HEK293 (cell line): ENCODE measurements at regions of chr11 and their contacts with region 1.

Region 1: DNA sequence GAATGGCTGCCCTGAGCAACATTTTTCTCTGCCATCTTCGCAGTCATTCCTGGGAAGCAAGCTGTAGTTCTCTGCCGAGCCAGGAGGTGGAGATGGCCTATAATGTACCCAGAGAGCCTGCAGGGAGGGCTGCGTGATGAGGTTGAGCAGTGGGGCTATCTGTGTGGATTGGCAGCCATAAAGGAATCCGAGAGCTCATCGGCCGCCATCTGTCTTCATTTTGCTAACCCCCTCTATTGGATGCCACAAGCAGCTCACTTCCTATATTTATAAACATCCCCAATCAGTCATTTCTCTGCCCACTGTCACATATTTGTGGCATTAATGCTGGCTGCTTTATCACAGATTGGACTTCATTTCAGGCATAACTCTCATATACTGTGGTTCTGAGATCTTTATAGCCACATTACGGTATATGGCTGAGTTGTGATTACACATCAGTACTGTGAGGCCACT is 209.5 kb downstream of the NTM start:
- H3K4me3 ChIP-seq: no peak overlapping the region
- H3K27ac ChIP-seq: no peak overlapping the region
- H3K4me1 ChIP-seq: no peaks in the 10 kb centered on the region
- CTCF ChIP-seq: no peak

Region 2: DNA sequence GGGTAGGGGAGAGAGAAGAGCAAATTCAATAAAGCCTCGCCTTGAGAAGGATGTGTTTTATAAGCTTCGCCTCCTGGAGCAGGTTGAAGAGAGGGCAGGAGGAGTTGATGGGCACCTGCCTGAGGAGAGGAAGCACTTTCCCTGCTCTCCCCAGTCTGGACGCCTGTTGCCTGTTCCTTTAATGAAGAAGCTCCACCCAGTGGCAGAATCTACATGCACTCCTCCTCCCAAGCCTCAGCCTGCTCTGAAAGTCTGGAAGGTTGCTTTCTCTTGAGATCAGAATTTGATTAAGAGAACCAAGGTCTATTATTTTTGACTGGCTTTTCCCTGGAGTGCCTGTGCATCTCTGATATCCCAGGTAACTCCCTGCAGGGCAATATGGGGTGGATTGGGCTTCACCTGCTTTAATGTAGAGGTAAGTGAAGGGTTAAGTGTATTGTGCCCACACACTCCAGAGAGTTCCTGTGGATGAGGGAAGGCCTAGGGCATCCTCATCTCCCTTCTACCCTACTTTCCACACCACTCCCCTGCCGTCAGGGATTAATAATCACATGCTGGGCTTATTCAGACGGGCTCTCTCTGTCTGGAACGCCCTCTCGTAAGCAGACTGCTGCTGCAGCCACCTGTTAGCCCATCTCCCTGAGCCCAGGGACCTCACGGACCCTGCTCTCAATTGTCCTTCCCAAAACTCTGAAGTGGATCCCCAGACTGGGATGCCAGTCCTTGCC is 187.3 kb before region 1 on chr11:
- CTCF ChIA-PET with region 1: no interaction called
- POLR2A ChIA-PET with region 1: no interaction called
- H3K4me3 ChIP-seq: no peak overlapping the region
- H3K27ac ChIP-seq: no peak overlapping the region
- H3K4me1 ChIP-seq: no peaks in the 10 kb centered on the region
- CTCF ChIP-seq: no peak

Region 3: DNA sequence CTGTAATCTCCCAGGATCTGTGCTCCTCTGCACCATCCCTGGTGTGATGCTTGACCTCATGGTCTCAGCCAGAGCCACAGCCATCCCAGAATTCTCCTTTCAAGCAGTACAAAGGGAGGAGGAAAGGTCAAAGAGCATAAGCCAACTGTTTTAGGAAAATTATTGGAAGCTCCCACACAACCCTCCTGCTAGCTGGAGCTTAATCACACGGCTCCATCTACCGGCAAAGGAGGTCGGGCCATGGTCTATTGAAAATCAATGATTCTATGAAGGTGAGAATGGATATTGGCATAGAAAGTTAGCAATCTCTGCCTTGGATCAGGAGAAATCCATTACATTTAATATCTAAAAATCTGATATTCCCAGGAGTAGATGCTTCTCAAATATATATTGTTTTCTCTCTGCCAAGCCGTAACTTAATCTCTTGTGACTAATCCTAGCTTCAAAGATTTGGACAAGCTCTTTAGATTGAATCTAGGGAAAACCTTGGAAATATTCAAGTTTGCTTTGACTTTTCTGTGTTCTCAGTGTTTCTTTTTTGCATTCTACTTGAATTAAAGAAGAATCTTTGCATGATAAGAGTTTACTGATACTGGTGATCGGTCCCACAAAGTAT is 50.1 kb after region 1 on chr11:
- CTCF ChIA-PET with region 1: interaction called, 11 read pairs
- POLR2A ChIA-PET with region 1: no interaction called
- H3K4me3 ChIP-seq: no peak overlapping the region
- H3K27ac ChIP-seq: no peak overlapping the region
- H3K4me1 ChIP-seq: no peaks in the 10 kb centered on the region
- CTCF ChIP-seq: no peak

Region 4: DNA sequence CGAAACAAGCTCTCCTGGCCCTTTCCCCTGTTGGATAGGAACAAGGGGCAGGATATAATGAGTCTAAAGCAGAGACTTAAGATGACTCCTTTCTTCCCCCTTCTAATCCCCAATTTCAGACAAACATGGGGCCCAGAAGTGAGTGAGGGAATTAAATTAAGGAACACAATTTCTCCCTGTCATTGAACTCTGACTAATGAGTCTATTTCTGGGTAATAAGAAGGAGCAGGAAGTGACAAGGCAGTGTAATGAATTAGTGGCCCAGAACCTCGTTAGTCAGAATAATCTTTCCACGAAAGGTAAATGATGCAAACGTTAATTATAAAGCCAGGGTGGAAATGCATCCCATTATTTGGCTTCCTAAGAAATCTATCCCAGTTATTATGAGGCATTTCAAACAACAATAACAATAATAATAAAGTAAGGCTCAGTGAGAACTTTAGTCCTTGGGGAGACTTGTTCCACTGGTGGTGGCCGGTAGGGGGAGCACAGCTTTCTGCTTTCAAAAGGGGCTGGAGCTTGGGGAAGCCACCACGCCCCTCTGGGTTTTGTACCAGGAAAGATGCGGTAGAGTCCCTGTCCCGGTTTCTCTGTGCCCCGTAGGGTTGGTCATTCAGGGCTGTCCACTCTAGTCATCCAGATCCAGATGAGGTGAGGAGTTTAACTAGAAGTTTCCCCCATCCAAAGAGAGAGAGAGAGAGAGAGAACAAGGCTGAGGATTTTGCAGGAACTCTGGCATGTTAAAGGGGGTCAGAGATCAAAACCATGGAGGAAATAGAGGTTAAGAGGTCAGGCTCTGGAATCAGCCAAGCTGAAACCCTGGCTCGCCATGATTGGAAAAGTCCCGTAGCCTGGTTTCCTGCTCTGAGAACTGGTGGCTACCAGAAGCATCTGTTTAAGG is 88.8 kb after region 1 on chr11:
- CTCF ChIA-PET with region 1: interaction called, 42 read pairs
- POLR2A ChIA-PET with region 1: no interaction called
- H3K4me3 ChIP-seq: no peak overlapping the region
- H3K27ac ChIP-seq: no peak overlapping the region
- H3K4me1 ChIP-seq: no peaks in the 10 kb centered on the region
- CTCF ChIP-seq: no peak

Region 5: DNA sequence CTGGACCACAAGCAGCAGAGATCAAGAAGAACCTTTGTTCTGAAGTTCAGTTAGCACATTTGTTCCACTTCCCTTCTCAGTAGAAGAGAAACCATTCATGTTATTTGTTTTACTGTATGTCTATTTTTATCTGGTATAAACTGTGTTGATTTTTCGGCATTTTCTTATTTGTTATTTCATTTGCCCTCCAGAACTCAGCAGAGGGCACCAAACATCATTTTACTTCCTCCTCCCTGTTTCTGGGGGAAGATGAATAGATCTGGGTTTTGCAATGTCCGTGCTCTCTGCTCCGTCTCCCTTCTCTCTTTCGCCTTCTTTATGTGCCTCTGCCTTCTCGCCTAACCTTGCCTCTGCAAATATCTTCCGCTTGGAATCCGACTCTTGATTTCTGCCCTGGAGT is 157.4 kb after region 1 on chr11:
- CTCF ChIA-PET with region 1: no interaction called
- POLR2A ChIA-PET with region 1: no interaction called
- H3K4me3 ChIP-seq: no peak overlapping the region
- H3K27ac ChIP-seq: no peak overlapping the region
- H3K4me1 ChIP-seq: no peaks in the 10 kb centered on the region
- CTCF ChIP-seq: no peak

Region 6: DNA sequence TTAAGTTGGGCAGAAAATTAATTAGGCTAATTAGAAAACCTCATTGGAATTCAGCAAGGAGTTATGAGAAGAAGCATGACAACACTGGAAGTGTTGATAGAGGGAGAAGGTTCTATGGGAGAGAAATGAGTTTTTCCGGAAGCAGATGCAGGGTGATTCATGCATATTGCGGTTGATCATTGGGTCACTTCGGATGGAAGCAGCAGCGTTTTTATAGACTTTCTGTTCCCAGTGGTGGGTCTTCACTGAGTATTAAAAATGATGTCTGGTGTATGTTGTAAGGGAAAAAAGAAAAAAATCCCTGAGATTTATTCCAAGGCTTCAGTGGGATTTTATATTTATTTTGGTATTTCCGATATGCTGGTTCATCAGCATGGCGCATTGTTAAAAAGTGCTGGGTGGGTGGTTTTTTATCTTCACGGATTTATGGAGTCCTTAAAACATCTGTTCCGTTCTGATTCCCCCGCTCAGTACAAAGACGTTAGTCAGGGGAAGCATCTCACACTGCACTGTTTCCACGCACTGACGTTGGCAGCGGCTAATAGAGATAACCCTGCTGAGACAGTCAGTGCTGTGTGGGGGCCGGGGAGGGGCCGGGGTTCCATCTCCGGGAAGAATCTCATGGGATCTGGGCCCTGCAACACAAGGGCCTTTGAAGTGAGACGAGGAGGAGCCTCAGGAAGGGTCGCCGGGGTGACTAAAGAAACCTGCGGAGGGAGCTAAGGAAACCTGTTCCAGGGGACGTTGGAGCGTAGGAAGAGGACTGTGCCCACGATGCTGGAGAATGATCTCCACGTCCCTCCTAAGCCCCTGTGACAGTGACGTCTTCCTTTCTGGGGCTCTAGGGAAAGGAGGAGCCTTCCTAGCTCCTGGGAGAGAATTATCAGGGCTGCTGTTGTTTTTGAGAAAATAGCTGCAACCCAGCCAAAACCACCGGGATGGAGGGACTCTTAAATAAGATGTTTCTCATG is 180.4 kb after region 1 on chr11:
- CTCF ChIA-PET with region 1: no interaction called
- POLR2A ChIA-PET with region 1: no interaction called
- H3K4me3 ChIP-seq: no peak overlapping the region
- H3K27ac ChIP-seq: no peak overlapping the region
- H3K4me1 ChIP-seq: no peaks in the 10 kb centered on the region
- CTCF ChIP-seq: no peak